Dendritic cell treated with granulocyte-macrophage colony-stimulating factor and Interleukin-4, amounts not matched to agents 40 ng/mL and 50 ng/mL, for 4 days (primary cell): ENCODE measurements at regions of chr3 and their contacts with region 1.

Region 1: GRCh38 chr3:156382458-156383346 is 172.2 kb downstream of the SSR3 start:
- H3K4me3 Mint-ChIP-seq: no peak overlapping the region
- H3K27ac Mint-ChIP-seq: no peak overlapping the region
- H3K4me1 Mint-ChIP-seq: no peaks in the 10 kb centered on the region
- H3K27me3 Mint-ChIP-seq: peaks cover 6% of the 10 kb centered on the region

Region 2: DNA sequence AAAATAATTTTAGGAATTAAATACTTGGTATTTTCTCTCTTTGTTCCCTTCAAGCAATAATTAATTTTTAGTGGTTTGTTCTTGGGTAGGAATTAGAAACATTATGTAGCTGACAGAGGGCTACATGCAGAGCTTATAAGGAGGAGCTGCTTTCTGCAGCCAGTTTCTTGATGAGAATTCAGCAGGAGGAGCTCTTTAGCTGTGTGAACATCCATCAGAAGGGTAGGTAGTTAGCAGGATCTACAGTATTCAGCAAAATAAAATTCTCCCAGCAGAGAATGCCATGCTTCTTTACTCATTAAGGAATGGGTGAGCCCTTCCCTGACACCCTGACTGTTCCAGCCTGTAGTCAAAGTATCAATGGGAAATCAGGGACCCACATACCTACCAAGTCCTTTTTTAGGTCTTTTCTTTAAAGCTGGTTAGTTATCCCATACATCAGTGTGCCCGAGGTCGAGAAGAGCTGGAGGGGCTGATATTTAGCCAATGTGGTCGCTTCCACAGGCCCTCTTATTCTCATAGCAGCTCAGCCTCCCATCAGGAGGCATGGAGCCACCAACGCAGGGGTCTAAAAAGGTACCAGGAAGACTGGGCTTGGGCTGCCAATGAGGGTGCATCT is 208.4 kb before region 1 on chr3:
- intact Hi-C with region 1: loop called (anchors 5 kb)
- H3K4me3 Mint-ChIP-seq: no peak overlapping the region
- H3K27ac Mint-ChIP-seq: no peak overlapping the region
- H3K4me1 Mint-ChIP-seq: no peaks in the 10 kb centered on the region
- H3K27me3 Mint-ChIP-seq: no peaks in the 10 kb centered on the region

Region 3: DNA sequence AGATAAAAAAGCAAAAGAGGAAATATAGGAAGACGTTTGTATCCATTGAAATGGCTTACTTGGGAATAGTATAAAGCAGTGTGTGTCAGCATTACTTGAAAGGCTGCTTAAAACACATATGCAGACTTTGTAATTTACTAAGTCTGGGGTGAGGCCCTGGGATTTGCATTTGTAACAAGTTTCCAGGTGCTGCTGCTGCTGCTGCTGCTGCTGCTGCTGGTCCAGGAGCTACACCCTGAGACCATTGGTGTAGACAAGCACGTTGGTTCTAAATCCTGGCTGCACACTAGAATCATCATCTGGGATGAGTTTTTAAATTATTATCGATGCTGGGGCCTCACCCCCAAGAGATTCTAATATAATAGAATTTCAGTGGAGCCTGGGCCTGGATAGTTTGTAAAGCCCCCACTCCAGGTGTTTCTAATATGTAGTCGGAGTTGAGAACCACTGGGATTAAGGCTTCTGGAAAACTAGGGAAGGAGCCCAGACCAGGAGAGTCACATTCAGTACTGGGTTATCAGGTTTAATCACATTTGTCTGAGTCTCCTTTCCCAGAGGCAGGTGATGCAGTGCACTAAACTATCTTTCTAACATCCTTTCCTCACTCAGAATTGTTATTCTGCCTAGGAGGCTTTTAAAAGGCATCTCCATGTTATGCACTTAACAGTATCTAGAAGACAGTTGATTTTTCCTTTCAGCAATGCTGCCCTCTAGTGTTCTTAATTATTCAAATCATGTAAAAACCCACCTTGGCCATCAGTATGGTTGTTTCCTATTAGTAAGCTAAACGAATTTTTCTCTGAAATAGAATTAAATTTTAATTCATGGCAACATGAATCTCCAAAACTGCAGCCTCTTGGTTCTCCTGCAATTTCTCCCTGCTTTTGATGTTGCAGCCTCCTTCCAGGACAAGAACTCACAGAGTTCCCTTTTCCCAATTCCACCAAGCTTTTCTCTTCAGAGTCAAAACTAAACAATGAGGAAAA is 126.8 kb after region 1 on chr3:
- intact Hi-C with region 1: loop called (anchors 10 kb)
- H3K4me3 Mint-ChIP-seq: no peak overlapping the region
- H3K27ac Mint-ChIP-seq: no peak overlapping the region
- H3K4me1 Mint-ChIP-seq: no peaks in the 10 kb centered on the region
- H3K27me3 Mint-ChIP-seq: peaks cover 15% of the 10 kb centered on the region